Activated CD4-positive, alpha-beta memory T cell treated with anti-CD3 and anti-CD28 coated beads, Interleukin-2, amount 10 ng/mL, durations not matched to agents 7 days and 5 days (primary cell): ENCODE measurements at regions of chr7 and their contacts with region 1.

Region 1: GRCh38 chr7:128387216-128388144 is 22.3 kb downstream of the IMPDH1 start:
- DNase-seq: peak; percentile 66
- H3K4me3 Mint-ChIP-seq: no peak overlapping the region
- H3K27ac Mint-ChIP-seq: no peak overlapping the region
- H3K4me1 Mint-ChIP-seq: no peaks in the 10 kb centered on the region
- H3K27me3 Mint-ChIP-seq: peaks cover 3% of the 10 kb centered on the region

Region 2: GRCh38 chr7:128201051-128201689 is 186.3 kb before region 1 on chr7:
- CTCF ChIA-PET with region 1: no interaction called
- POLR2A ChIA-PET with region 1: no interaction called
- DNase-seq: no peak
- H3K4me3 Mint-ChIP-seq: no peak overlapping the region
- H3K27ac Mint-ChIP-seq: no peak overlapping the region
- H3K4me1 Mint-ChIP-seq: peaks cover 9% of the 10 kb centered on the region
- H3K27me3 Mint-ChIP-seq: peaks cover 54% of the 10 kb centered on the region

Region 3: DNA sequence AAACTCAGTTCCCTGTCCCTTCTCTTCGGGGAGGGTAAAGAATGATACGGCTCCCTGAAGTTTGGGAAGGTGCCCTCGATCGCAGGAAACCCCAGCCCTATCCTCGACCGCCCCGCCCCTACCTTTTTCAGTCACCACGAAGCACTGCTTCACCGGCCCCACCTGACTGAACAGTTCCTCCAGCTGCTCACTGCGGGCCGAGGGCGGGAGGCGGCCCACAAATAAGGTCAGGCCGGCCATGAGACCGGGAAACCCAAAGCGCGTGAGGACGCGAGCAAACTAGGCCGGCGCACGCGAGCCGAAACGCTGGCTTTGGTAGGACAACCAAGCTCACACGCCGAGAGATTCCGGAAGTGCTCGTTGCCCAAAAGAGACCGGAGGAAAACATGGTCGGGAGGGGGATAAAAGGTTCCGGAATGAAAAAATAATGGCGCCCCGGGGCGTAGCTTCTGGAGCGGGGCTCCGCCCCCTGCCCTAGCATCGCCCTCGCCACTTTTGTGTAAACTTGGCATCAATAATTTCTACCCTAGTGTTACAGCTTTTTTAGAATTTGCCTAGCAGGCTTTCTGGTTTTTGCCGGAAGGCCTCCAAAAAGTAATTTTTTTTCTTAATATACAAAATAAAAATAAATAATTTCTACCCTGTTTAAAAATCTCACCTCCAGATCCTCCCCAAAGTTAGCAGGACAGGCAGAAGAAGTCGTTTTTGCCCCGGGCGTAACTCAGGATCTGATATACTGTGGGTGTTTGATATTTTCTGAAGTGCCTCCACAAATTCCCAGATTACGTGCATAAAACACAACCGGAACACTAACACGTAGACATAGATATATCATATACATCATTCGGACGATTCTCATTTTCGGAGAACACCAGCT is 43.7 kb before region 1 on chr7 and contains the start of gene RBM28:
- CTCF ChIA-PET with region 1: interaction called, 52 read pairs
- POLR2A ChIA-PET with region 1: interaction called, 10 read pairs
- DNase-seq: peak; percentile 88
- H3K4me3 Mint-ChIP-seq: peak within 1 kb of the TSS; percentile 93
- H3K27ac Mint-ChIP-seq: peak within 1 kb of the TSS; percentile 88
- H3K4me1 Mint-ChIP-seq: peaks cover 31% of the 10 kb centered on the region
- H3K27me3 Mint-ChIP-seq: peaks cover 15% of the 10 kb centered on the region
- total RNA-seq, gene RBM28: 30.7 to 34.8 TPM

Region 4: DNA sequence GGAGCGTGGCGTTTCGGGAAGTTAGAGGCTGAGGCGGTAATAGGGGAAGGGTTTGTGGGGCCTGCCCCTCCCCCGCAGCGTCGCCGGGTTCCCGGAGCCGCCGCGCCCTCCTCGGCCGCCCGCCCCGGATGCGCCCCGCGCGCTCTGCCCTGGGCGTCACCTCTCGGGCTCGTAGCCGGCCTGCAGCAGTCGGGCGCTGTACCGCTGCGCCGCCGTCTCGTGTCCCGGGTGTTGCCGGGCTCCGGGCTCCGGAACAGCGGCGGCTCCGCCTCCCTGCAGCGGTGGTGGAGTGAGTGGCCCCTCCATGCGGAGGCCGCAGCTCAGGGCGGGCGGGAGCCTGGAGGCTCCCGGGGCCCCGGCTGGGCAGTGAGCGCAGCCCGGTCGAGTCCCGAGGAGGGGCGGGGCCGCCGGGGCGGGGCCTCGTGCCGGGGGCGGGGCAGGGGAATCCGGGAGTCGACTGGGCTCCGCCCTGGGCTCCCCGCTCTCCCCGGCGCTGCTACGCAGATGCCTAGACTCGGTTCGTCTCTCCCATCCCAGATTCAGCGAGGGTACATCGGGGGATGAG is 22.2 kb after region 1 on chr7 and contains the start of gene IMPDH1:
- CTCF ChIA-PET with region 1: interaction called, 12 read pairs
- POLR2A ChIA-PET with region 1: interaction called, 7 read pairs
- DNase-seq: peak; percentile 88
- H3K4me3 Mint-ChIP-seq: peak within 1 kb of the TSS; percentile 87
- H3K27ac Mint-ChIP-seq: peak within 1 kb of the TSS; percentile 80
- H3K4me1 Mint-ChIP-seq: peaks cover 35% of the 10 kb centered on the region
- H3K27me3 Mint-ChIP-seq: peaks cover 20% of the 10 kb centered on the region
- total RNA-seq, gene IMPDH1: 64.7 to 67.4 TPM

Region 5: GRCh38 chr7:128455551-128456254 is 68.2 kb after region 1 on chr7 and contains the start of gene HILPDA:
- CTCF ChIA-PET with region 1: interaction called, 23 read pairs
- POLR2A ChIA-PET with region 1: interaction called, 3 read pairs
- DNase-seq: peak; percentile 95
- H3K4me3 Mint-ChIP-seq: peak within 1 kb of the TSS; percentile 94
- H3K27ac Mint-ChIP-seq: peak within 1 kb of the TSS; percentile 90
- H3K4me1 Mint-ChIP-seq: peaks cover 56% of the 10 kb centered on the region
- H3K27me3 Mint-ChIP-seq: peaks cover 20% of the 10 kb centered on the region
- total RNA-seq, gene HILPDA: 51.8 to 53.4 TPM